ENCODE measurements at regions of chr13 and their contacts with region 1.

Region 1: GRCh38 chr13:58097831-58098230 is 466.3 kb downstream of the PCDH17 start:
- DNase-seq: no peak
- ATAC-seq: no peak
- H3K4me3 ChIP-seq: no peak overlapping the region
- H3K27ac ChIP-seq: no peak overlapping the region
- H3K4me1 ChIP-seq: no peaks in the 10 kb centered on the region
- H3K27me3 ChIP-seq: no peaks in the 10 kb centered on the region
- CTCF ChIP-seq: no peak

Region 2: DNA sequence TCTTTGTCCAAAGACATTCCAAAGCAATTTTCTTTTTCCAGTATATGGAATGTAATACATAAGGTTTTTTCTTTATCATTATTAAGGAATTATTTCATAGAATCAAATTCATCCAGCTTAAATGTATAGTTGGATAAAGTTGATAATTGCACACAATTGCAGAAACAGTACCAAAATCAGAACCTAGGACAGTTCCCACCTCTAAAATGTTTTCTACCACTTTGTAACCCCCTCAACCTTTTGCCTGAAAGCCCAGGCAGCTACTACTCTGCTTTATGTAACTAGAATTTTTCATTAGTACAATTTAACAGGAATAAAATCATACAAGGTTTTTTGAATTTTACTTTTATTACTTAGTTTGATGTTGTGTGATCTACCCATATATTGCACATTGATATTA is 832.9 kb before region 1 on chr13:
- intact Hi-C with region 1: no loop called
- DNase-seq: no peak
- ATAC-seq: no peak
- H3K4me3 ChIP-seq: no peak overlapping the region
- H3K27ac ChIP-seq: no peak overlapping the region
- H3K4me1 ChIP-seq: no peaks in the 10 kb centered on the region
- H3K27me3 ChIP-seq: no peaks in the 10 kb centered on the region
- CTCF ChIP-seq: no peak

Region 3: DNA sequence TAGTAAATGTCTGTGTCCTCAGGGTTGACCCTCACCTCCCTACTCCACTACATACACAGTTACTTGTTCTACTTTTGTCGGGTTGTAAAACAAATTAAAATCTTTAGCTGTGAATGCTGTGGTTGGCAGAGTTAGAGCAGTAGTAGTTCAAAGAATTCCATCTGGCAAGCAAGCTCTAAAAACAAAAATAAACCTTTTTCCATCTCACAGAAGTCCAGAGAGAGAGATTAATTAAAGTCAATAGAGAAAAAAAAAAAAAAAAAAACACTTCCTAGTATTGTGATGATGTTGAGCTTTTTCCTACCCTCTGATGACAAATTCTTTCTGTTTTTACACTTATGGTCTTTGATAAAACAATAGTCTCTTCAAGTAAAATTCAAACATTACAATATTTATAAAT is 127.9 kb before region 1 on chr13:
- intact Hi-C with region 1: no loop called
- DNase-seq: no peak
- ATAC-seq: no peak
- H3K4me3 ChIP-seq: no peak overlapping the region
- H3K27ac ChIP-seq: no peak overlapping the region
- H3K4me1 ChIP-seq: no peaks in the 10 kb centered on the region
- H3K27me3 ChIP-seq: no peaks in the 10 kb centered on the region
- CTCF ChIP-seq: no peak

Region 4: DNA sequence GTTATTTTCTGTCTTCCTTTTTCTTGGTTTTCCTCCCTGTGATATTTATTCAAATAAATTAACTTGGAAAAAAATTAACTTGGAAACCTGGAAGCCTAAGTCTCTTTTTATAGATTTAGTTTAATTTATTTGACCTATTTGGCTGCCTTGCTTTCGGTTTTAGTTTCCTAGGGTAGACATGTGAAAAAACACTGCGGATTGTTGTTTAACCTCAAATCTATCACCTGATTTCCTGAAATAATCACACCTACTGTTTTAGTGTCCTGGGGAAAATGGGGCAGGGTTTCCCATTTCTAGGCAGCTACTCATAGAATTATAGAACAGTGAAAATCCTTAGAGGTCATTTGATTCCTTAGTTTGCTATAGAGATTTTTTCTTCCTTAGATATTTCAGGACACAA is 53.9 kb before region 1 on chr13:
- intact Hi-C with region 1: loop called in 1 of 2 experiments (anchors 5 kb)
- DNase-seq: no peak
- ATAC-seq: no peak
- H3K4me3 ChIP-seq: no peak overlapping the region
- H3K27ac ChIP-seq: no peak overlapping the region
- H3K4me1 ChIP-seq: no peaks in the 10 kb centered on the region
- H3K27me3 ChIP-seq: no peaks in the 10 kb centered on the region
- CTCF ChIP-seq: no peak

Region 5: DNA sequence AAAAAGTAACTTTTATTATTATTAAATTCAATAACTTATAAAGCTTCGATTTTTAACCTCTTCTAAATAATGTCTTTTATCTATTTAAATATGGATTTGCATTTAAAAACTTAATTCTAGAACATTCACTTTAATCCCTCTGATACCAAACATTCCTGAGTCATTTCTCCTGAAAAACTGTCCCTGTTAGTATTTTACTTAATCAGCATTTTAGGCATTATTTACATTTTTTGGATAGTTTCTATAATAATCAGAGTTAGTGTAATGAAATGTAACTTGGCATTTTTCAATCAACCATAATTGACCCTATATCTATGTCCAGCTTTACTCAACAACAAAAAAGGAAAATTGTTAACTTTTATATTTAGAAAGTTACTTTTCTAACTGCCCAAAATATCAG is 38.2 kb before region 1 on chr13:
- intact Hi-C with region 1: no loop called
- DNase-seq: no peak
- ATAC-seq: no peak
- H3K4me3 ChIP-seq: no peak overlapping the region
- H3K27ac ChIP-seq: no peak overlapping the region
- H3K4me1 ChIP-seq: no peaks in the 10 kb centered on the region
- H3K27me3 ChIP-seq: no peaks in the 10 kb centered on the region
- CTCF ChIP-seq: no peak

Region 6: DNA sequence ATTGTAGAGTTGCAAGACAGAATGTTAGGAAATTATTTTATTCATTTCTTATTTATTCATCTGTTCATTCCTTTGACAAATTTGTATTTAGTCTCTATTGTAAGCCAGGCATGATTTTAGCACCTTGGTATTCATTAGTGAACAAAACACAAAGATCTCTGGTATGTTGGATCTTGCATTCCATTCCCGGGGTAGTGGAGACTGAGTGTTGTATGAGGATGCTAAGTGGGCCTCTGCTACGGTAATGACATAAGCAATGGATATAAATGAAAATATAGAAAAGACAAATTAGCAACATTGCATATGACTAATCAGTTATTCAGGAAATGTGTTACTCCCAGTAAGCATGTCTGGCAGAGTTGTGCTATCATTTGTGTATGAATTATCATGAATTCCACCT is 17.0 kb before region 1 on chr13:
- intact Hi-C with region 1: loop called in 1 of 2 experiments (anchors 1 kb)
- DNase-seq: no peak
- ATAC-seq: no peak
- H3K4me3 ChIP-seq: no peak overlapping the region
- H3K27ac ChIP-seq: no peak overlapping the region
- H3K4me1 ChIP-seq: no peaks in the 10 kb centered on the region
- H3K27me3 ChIP-seq: no peaks in the 10 kb centered on the region
- CTCF ChIP-seq: no peak